H1 (cell line): ENCODE measurements at regions of chr12 and their contacts with region 1.

Region 1: GRCh38 chr12:107917912-107918800 is 143.7 kb downstream of the ASCL4 start:
- DNase-seq: peak in 1 of 2 experiments; percentile 21
- H3K4me3 ChIP-seq: no peak overlapping the region
- H3K27ac ChIP-seq: no peak overlapping the region
- H3K4me1 ChIP-seq: no peaks in the 10 kb centered on the region
- H3K27me3 ChIP-seq: peaks cover 0 to 3% (median 0%) of the 10 kb centered on the region in 4 experiments; a peak in 1 of 7 replicates
- CTCF ChIP-seq: peak; percentile 69 to 97 (median 85)
- EP300 ChIP-seq: no peak
- POLR2A ChIP-seq: no peak
- RAD21 ChIP-seq: peak; percentile 97 to 98

Region 2: GRCh38 chr12:107844312-107844943 is 73.7 kb before region 1 on chr12:
- CTCF ChIA-PET with region 1: no interaction called
- POLR2A ChIA-PET with region 1: no interaction called
- DNase-seq: peak in 1 of 2 experiments; percentile 72
- H3K4me3 ChIP-seq: peak overlapping the region; percentile 29 to 64 (median 58)
- H3K27ac ChIP-seq: no peak overlapping the region
- H3K4me1 ChIP-seq: peaks cover 0 to 12% (median 6%) of the 10 kb centered on the region in 4 experiments; a peak in 5 of 7 replicates
- H3K27me3 ChIP-seq: peaks cover 25 to 55% (median 42%) of the 10 kb centered on the region in 4 experiments
- CTCF ChIP-seq: no peak
- EP300 ChIP-seq: no peak
- POLR2A ChIP-seq: no peak
- RAD21 ChIP-seq: no peak

Region 3: GRCh38 chr12:107859367-107859766 is 58.8 kb before region 1 on chr12:
- CTCF ChIA-PET with region 1: no interaction called
- POLR2A ChIA-PET with region 1: no interaction called
- DNase-seq: no peak
- H3K4me3 ChIP-seq: no peak overlapping the region
- H3K27ac ChIP-seq: no peak overlapping the region
- H3K4me1 ChIP-seq: no peaks in the 10 kb centered on the region
- H3K27me3 ChIP-seq: peaks cover 0 to 8% (median 4%) of the 10 kb centered on the region in 4 experiments; a peak in 5 of 7 replicates
- CTCF ChIP-seq: no peak
- EP300 ChIP-seq: no peak
- POLR2A ChIP-seq: no peak
- RAD21 ChIP-seq: no peak

Region 4: GRCh38 chr12:107875786-107876185 is 42.4 kb before region 1 on chr12:
- CTCF ChIA-PET with region 1: no interaction called
- POLR2A ChIA-PET with region 1: no interaction called
- DNase-seq: no peak
- H3K4me3 ChIP-seq: no peak overlapping the region
- H3K27ac ChIP-seq: no peak overlapping the region
- H3K4me1 ChIP-seq: no peaks in the 10 kb centered on the region
- H3K27me3 ChIP-seq: peaks cover 0 to 3% (median 0%) of the 10 kb centered on the region in 4 experiments; a peak in 2 of 7 replicates
- CTCF ChIP-seq: no peak
- EP300 ChIP-seq: no peak
- POLR2A ChIP-seq: no peak
- RAD21 ChIP-seq: no peak

Region 5: DNA sequence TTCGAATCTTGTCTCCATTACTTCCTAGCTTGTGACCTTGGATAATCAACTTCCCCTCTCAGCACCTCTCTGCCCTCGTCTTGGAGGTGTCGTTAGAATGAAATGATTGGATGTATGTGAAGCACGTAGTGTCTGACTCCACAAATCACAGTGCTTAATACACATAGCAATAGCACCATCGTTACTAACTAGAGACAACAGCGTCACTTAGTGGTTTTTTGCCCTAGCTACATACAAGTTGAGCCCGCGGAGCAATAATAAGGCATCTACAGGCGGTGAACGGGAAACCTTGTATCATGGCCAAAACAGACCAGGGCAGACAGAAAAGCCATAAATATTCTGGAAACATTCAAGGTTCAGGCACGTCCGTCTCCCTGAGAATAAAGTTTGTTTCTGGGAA is 11.3 kb after region 1 on chr12:
- CTCF ChIA-PET with region 1: interaction called, 65 read pairs
- POLR2A ChIA-PET with region 1: no interaction called
- DNase-seq: no peak
- H3K4me3 ChIP-seq: no peak overlapping the region
- H3K27ac ChIP-seq: no peak overlapping the region
- H3K4me1 ChIP-seq: no peaks in the 10 kb centered on the region
- H3K27me3 ChIP-seq: no peaks in the 10 kb centered on the region
- CTCF ChIP-seq: peak in 2 of 3 experiments; percentile 54 to 67; a peak in 3 of 4 replicates
- EP300 ChIP-seq: no peak
- POLR2A ChIP-seq: no peak
- RAD21 ChIP-seq: peak; percentile 67 to 80

Region 6: DNA sequence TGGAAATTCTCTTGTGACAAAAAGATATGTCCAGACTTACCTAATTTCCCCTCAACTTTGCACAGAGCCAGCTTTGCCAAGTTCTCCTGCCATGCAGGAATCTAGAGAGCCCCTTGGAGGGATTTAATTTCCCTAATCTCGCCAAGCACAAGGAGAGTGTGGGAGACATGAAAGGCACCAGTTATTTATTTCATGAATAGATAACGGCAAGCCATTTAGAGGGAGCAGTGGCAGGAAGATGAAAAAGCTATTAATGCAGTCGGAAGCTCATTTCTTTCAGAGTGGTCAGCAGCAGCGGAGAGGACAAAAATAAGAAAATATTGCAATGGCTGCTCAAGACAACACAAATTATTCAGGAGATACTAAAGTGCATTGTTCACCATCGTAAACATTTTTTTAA is 60.0 kb after region 1 on chr12:
- CTCF ChIA-PET with region 1: interaction called, 11 read pairs
- POLR2A ChIA-PET with region 1: no interaction called
- DNase-seq: no peak
- H3K4me3 ChIP-seq: no peak overlapping the region
- H3K27ac ChIP-seq: no peak overlapping the region
- H3K4me1 ChIP-seq: no peaks in the 10 kb centered on the region
- H3K27me3 ChIP-seq: no peaks in the 10 kb centered on the region; a peak in 1 of 7 replicates
- CTCF ChIP-seq: no peak
- EP300 ChIP-seq: no peak
- POLR2A ChIP-seq: no peak
- RAD21 ChIP-seq: no peak

Region 7: DNA sequence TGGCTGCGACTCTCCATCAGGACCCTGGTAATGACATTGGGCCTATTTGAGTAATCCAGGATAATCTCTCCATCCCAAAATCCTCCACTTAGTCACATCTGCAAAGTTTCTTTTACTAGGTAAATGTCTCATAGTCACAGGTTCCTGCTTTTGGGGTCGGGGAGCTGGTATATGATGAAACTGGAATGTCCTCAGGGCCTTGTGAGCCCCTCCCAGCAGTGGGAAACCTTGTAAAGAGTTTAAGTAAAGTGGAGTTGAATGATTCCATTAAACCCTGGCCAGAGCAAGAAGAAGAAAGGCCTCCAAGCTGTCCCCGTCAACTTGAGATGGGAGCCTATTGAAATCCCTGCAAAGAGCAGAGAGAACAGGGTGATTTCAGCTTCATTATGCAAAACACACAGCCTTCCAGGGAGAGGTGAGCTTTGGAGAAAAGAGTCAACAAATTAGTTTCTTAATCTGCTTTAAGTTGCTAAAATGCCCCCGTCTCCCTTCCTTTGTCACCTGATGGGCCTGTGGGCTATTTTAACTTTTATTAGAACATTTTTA is 223.5 kb after region 1 on chr12:
- CTCF ChIA-PET with region 1: no interaction called
- POLR2A ChIA-PET with region 1: no interaction called
- DNase-seq: no peak
- H3K4me3 ChIP-seq: no peak overlapping the region
- H3K27ac ChIP-seq: no peak overlapping the region
- H3K4me1 ChIP-seq: peaks cover 3 to 10% (median 9%) of the 10 kb centered on the region in 4 experiments; a peak in 6 of 7 replicates
- H3K27me3 ChIP-seq: no peaks in the 10 kb centered on the region
- CTCF ChIP-seq: no peak
- EP300 ChIP-seq: no peak
- POLR2A ChIP-seq: no peak
- RAD21 ChIP-seq: no peak